AG04450 (cell line): ENCODE measurements at regions of chr2 and their contacts with region 1.

Region 1: GRCh38 chr2:217934321-217935131 is 68.3 kb downstream of the TNS1 start:
- DNase-seq: peak; percentile 47
- H3K4me3 ChIP-seq: no peak overlapping the region; the same call in 1 of the 2 replicates
- H3K27ac ChIP-seq: peak overlapping the region; percentile 87
- H3K27me3 ChIP-seq: no peaks in the 10 kb centered on the region
- CTCF ChIP-seq: no peak

Region 2: GRCh38 chr2:217920879-217921603 is 13.5 kb before region 1 on chr2:
- CTCF ChIA-PET with region 1: interaction called, 11 read pairs
- POLR2A ChIA-PET with region 1: interaction called, 3 read pairs
- DNase-seq: no peak
- H3K4me3 ChIP-seq: no peak overlapping the region
- H3K27ac ChIP-seq: peak overlapping the region; percentile 83
- H3K27me3 ChIP-seq: no peaks in the 10 kb centered on the region
- CTCF ChIP-seq: no peak

Region 3: GRCh38 chr2:217964275-217965161 is 30.0 kb after region 1 on chr2:
- CTCF ChIA-PET with region 1: interaction called, 3 read pairs
- POLR2A ChIA-PET with region 1: interaction called, 13 read pairs
- DNase-seq: no peak
- H3K4me3 ChIP-seq: no peak overlapping the region
- H3K27ac ChIP-seq: peak overlapping the region; percentile 47
- H3K27me3 ChIP-seq: no peaks in the 10 kb centered on the region
- CTCF ChIP-seq: no peak

Region 4: DNA sequence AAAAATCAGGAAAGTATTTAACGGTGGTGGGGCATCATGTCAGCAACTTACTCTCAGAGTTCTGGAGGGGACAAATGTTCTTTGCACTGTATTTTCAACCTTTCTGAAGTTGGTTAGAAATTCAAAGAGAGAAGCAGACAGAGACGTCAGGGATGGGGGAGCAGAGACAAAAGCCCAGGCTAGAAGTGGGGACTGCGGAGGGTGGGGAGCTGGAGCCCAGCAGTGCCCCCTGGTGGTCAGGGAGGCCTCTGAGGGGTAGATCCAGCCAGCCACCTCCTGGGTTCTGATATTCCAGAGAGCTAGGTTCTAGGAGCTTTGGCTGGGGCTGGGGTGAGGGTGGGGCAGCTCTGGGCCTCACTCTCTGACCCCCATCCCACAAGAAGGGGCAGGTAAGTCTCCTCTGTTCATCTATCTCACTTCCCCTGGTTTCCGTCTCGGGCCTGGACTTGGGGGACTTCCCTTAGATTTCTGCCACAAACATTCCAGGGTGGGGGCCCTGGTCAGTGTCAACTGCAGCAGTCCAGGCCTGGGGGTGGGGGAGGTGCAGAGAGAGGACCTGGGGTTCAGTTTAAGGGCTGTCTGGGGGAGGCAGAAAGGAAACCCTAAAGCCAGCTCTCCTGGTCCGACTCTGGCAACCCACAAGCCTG is 59.4 kb after region 1 on chr2:
- CTCF ChIA-PET with region 1: interaction called, 14 read pairs
- POLR2A ChIA-PET with region 1: interaction called, 3 read pairs
- DNase-seq: no peak
- H3K4me3 ChIP-seq: no peak overlapping the region
- H3K27ac ChIP-seq: peak overlapping the region; percentile 88
- H3K27me3 ChIP-seq: no peaks in the 10 kb centered on the region
- CTCF ChIP-seq: peak; percentile 77